ENCODE measurements at regions of chr10 and their contacts with region 1.

Region 1: DNA sequence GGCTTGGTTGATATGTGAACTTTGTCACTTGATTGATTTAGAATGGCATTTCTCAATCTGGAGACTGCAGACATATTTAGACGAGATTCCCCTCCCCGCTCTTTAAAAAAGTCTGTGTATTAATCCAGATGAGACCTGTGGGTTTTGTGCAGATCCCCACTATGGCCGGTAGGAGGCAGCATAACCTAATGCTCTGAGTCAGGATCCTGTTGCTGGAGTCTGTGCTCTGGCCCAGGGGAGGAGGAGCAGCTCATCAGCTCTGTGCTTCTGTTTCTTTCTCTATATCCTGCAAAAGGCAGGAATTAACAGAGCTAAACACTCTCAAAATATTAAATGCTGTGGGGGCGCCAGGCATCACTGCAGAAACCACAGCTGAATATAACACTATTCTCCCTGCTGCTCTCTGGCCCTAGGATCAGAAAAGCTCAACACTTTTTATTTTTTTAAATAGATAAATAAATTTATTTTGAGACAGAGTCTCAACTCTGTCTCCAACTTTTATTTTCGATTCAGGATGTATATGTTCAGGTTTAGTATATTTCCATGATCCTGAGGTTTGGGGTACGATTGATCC is 23.9 kb upstream of the SEPHS1 start:
- DNase-seq: peak; percentile 83
- H3K4me3 ChIP-seq: no peak overlapping the region
- H3K27ac ChIP-seq: no peak overlapping the region
- H3K4me1 ChIP-seq: no peaks in the 10 kb centered on the region
- H3K27me3 ChIP-seq: peaks cover 9 to 11% of the 10 kb centered on the region in 2 experiments
- CTCF ChIP-seq: peak; percentile 91 to 93
- POLR2A ChIP-seq: no peak

Region 2: GRCh38 chr10:13099666-13100348 is 272.2 kb before region 1 on chr10 and contains the start of gene OPTN:
- CTCF ChIA-PET with region 1: no interaction called
- POLR2A ChIA-PET with region 1: no interaction called
- dilution Hi-C with region 1: no loop called
- intact Hi-C with region 1: no loop called
- DNase-seq: peak; percentile 88
- H3K4me3 ChIP-seq: peak within 1 kb of the TSS; percentile 71 to 92 (median 91)
- H3K27ac ChIP-seq: peak within 1 kb of the TSS; percentile 66
- H3K4me1 ChIP-seq: peaks cover 9% of the 10 kb centered on the region
- H3K27me3 ChIP-seq: no peaks in the 10 kb centered on the region
- CTCF ChIP-seq: peak; percentile 81 to 82
- POLR2A ChIP-seq: peak; percentile 56
- total RNA-seq, gene OPTN: 79.9 and 94.2 TPM in 2 replicates

Region 3: GRCh38 chr10:13348216-13349017 is 23.6 kb before region 1 on chr10 and contains the start of gene SEPHS1:
- CTCF ChIA-PET with region 1: interaction called, 12 read pairs
- POLR2A ChIA-PET with region 1: no interaction called
- dilution Hi-C with region 1: no loop called
- intact Hi-C with region 1: no loop called
- DNase-seq: peak; percentile 62
- H3K4me3 ChIP-seq: peak within 1 kb of the TSS; percentile 40 to 84 (median 82)
- H3K27ac ChIP-seq: peak within 1 kb of the TSS; percentile 65
- H3K4me1 ChIP-seq: peaks cover 24% of the 10 kb centered on the region
- H3K27me3 ChIP-seq: peaks cover 30 to 36% of the 10 kb centered on the region in 2 experiments
- CTCF ChIP-seq: peak in 1 of 2 donors; percentile 5
- POLR2A ChIP-seq: no peak
- total RNA-seq, gene SEPHS1: 55.4 and 59.9 TPM in 2 replicates

Region 4: DNA sequence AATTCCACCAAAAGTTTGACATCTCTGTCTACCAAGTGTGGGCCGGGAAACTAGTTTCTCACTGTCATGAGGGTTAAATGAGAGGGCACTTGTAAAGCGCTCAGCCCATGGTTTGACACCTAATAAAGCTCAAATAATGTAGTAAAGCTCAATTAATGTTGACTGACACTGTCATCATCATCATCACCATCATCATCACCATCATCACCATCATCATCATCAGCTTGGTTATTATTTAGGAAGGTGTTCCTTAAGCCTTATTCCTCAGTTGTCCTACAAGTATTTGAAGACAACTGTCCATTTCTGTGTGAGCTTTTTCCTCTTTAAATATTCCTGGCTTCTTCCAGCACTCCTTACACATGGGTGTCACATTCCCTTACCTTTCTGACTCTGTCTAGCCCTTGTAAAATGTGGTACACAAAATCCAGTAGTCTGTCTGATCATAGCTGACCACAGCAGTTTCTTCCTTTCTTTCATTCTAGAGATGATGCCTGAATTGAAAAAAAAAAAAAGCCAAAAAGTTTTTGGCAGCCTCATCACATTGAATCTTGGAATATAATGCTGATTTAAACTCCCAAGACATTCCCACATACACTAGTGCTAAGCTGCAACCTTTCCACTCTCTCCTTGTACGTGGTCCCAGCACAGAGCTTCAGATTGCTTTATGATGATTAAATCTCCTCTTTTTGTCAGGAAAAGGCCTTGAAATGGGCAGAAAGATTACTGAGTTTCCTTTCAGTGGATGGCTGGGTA is 16.7 kb after region 1 on chr10:
- CTCF ChIA-PET with region 1: interaction called, 38 read pairs
- POLR2A ChIA-PET with region 1: no interaction called
- dilution Hi-C with region 1: no loop called
- intact Hi-C with region 1: no loop called
- DNase-seq: no peak
- H3K4me3 ChIP-seq: no peak overlapping the region
- H3K27ac ChIP-seq: no peak overlapping the region
- H3K4me1 ChIP-seq: peaks cover 2% of the 10 kb centered on the region
- H3K27me3 ChIP-seq: peaks cover 34 to 41% of the 10 kb centered on the region in 2 experiments
- CTCF ChIP-seq: no peak
- POLR2A ChIP-seq: no peak

Region 5: DNA sequence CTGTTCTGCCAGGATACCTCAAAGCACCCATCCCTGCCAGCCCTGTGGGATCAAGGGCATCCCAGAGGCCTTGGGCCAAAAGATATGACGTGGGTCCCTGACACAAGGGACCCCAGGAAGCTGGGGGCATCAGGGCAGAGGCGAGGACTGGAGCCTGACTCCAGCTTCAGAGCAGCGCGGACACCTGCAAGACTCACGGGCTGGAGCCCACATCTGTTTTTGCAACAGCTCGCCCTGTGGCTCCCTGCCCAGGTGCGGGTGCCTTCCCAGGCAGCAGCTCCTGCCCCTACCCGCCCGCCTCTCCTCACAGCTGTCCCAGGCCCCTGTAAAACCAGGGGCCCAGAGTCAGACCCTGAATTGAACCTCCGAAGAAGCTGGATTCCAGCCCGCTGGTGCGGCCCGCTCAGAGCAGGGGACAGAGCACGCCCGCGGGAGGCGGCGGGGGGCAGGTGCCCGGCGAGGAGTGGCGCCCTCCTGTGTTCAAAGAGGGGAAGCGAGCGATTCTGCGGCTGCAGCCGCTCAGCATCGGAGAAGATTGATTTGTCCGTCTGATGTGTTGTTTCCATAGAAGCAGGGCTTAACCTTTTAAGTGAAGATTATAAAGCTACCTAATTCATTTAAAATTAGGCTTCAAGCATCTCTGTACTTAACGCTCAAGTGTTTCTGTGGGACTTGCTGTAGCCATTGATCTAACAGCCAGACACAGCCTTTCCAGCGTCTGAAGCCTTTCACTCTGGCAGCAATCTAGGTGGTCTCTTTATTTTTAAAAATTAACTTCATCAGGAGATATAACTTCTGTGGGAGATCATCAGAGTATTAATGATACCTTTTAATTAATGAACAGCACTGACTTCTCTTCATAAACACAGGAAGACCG is 68.4 kb after region 1 on chr10:
- CTCF ChIA-PET with region 1: interaction called, 89 read pairs
- POLR2A ChIA-PET with region 1: no interaction called
- dilution Hi-C with region 1: no loop called
- intact Hi-C with region 1: loop called (anchors 1 kb)
- DNase-seq: peak; percentile 52
- H3K4me3 ChIP-seq: no peak overlapping the region
- H3K27ac ChIP-seq: no peak overlapping the region
- H3K4me1 ChIP-seq: peaks cover 7% of the 10 kb centered on the region
- H3K27me3 ChIP-seq: peaks cover 11 to 27% of the 10 kb centered on the region in 2 experiments
- CTCF ChIP-seq: peak; percentile 89 to 96
- POLR2A ChIP-seq: no peak

Region 6: DNA sequence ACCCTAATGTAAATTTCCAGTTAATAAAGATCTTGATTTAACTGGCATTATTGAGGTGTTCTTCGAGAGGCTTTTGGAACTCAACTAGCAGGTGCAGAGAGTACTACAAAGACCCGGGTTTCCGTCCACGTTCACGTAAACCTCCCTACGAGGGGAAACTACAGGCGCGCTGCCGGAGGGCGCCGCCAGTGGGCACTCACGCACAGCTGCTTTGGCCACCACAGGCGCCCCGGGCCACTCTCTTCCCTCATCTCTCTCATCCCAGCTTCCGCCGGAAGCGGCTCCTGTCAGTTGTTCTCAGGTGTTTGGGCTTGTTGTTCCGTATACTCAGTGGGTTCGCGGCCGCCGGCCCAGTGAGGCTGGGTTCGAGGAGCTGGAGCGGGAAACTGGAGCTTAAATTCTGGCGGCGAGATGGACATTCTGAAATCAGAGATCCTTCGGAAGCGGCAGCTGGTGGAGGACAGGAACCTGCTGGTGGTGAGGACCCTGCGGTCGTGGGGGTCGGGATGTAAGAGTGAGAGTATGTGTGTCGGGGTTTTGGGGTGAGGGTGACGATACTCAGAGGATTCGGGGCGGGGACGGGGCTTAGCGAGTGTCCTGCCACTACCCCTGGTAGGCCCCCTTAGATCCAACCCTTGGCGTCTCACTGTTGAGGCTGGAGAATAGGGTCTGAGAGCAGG is 214.8 kb after region 1 on chr10 and contains the start of gene PRPF18:
- CTCF ChIA-PET with region 1: interaction called, 26 read pairs
- POLR2A ChIA-PET with region 1: no interaction called
- dilution Hi-C with region 1: no loop called
- intact Hi-C with region 1: loop called (anchors 2 kb)
- DNase-seq: peak; percentile 90
- H3K4me3 ChIP-seq: peak within 1 kb of the TSS; percentile 65 to 97 (median 91)
- H3K27ac ChIP-seq: peak within 1 kb of the TSS; percentile 25
- H3K4me1 ChIP-seq: peaks cover 9% of the 10 kb centered on the region
- H3K27me3 ChIP-seq: peaks cover 5 to 24% of the 10 kb centered on the region in 2 experiments
- CTCF ChIP-seq: peak; percentile 98 to 99
- POLR2A ChIP-seq: peak; percentile 62
- total RNA-seq, gene PRPF18: 21.0 and 23.1 TPM in 2 replicates